Activated CD4-positive, alpha-beta memory T cell treated with anti-CD3 and anti-CD28 coated beads for 36 hours (primary cell): ENCODE measurements at regions of chr10 and their contacts with region 1.

Region 1: GRCh38 chr10:103888113-103888841 is 29.7 kb downstream of the STN1 start:
- DNase-seq: peak; percentile 33
- H3K4me3 Mint-ChIP-seq: no peak overlapping the region
- H3K27ac Mint-ChIP-seq: peak overlapping the region; percentile 80
- H3K4me1 Mint-ChIP-seq: peaks cover 46% of the 10 kb centered on the region
- H3K27me3 Mint-ChIP-seq: no peaks in the 10 kb centered on the region

Region 2: DNA sequence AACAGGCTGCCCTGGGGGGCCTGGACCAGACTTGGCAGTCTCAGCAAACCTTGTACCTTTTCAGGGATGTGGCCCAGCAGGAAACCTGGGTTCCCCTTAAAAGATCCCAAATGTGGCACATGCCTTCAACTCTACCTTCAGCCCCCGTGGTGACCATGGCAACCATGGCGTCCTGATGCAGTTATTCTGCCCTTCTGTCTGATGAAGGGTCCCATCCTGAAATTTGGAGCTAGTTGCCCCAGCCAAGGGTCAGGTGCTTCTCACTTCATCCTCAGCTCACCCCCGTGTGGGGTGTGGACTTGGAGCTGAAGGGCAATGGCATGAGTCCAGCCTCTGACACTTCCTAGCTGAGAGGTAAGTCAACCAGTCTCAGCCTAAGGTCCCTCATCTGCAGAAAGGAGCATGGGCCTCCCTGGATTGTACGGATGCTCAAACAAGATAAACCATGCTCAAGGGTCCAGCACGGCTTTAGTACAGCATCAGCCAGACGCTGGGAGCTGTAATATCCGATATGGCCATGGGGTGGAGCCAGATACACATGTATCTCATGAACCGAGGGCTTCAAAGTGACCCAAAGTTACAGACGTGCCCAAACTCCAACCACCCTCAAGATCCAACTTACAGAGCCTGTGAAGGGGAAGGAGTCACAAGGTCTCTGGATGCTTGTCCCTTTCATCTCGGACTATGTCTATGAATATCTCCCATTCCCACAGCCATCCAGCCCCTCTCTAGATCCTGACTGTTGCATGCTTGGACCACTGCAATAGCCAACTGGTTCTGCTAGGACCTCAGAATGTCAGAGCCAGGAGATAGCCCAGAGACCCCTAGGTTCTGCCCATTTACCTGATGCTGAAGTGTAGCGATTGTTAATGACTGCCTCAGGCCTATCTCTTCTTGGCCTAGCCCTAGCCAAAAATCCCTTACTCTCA is 175.4 kb before region 1 on chr10:
- CTCF ChIA-PET with region 1: interaction called, 87 read pairs
- POLR2A ChIA-PET with region 1: no interaction called
- intact Hi-C with region 1: loop called (anchors 1 kb)
- DNase-seq: peak; percentile 89
- H3K4me3 Mint-ChIP-seq: no peak overlapping the region
- H3K27ac Mint-ChIP-seq: peak overlapping the region; percentile 4
- H3K4me1 Mint-ChIP-seq: peaks cover 2% of the 10 kb centered on the region
- H3K27me3 Mint-ChIP-seq: no peaks in the 10 kb centered on the region

Region 3: DNA sequence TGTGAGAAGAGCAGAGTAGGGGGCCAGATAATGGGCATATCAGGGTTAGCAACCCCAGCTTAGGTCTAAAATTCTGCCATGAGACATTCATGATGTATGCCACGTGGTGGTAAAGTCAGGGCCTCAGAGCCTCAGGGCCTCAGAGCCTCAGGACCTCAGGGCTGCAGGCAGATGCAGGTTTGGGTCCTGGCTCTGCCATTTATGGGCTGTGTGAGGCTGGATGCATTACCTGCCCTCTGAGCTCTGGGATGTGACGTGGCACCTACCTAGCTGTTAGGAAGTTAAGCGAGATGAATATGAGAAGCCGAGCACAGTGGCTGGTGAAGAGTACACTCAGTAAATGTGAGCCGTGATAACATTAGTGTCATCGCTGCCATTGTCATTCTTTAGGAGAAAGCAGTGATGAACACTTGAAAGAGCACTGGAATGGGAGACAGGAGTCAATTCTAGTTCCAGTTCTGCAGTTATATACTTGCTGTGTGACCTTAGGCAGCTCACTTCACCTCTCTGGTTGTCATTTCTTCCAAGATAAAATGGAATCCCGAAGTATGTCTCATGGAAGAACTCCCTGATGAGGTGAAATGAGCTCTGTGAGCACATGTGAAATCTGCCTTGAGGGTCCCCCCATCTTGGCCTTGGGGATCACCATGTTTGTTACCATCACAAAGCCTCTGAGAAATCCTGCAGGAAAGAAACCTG is 160.1 kb before region 1 on chr10:
- CTCF ChIA-PET with region 1: no interaction called
- POLR2A ChIA-PET with region 1: no interaction called
- intact Hi-C with region 1: no loop called
- DNase-seq: no peak
- H3K4me3 Mint-ChIP-seq: no peak overlapping the region
- H3K27ac Mint-ChIP-seq: no peak overlapping the region
- H3K4me1 Mint-ChIP-seq: peaks cover 3% of the 10 kb centered on the region
- H3K27me3 Mint-ChIP-seq: no peaks in the 10 kb centered on the region

Region 4: GRCh38 chr10:103800789-103801540 is 87.3 kb before region 1 on chr10:
- CTCF ChIA-PET with region 1: no interaction called
- POLR2A ChIA-PET with region 1: no interaction called
- intact Hi-C with region 1: no loop called
- DNase-seq: peak; percentile 76
- H3K4me3 Mint-ChIP-seq: no peak overlapping the region
- H3K27ac Mint-ChIP-seq: peak overlapping the region; percentile 35
- H3K4me1 Mint-ChIP-seq: peaks cover 21% of the 10 kb centered on the region
- H3K27me3 Mint-ChIP-seq: no peaks in the 10 kb centered on the region

Region 5: DNA sequence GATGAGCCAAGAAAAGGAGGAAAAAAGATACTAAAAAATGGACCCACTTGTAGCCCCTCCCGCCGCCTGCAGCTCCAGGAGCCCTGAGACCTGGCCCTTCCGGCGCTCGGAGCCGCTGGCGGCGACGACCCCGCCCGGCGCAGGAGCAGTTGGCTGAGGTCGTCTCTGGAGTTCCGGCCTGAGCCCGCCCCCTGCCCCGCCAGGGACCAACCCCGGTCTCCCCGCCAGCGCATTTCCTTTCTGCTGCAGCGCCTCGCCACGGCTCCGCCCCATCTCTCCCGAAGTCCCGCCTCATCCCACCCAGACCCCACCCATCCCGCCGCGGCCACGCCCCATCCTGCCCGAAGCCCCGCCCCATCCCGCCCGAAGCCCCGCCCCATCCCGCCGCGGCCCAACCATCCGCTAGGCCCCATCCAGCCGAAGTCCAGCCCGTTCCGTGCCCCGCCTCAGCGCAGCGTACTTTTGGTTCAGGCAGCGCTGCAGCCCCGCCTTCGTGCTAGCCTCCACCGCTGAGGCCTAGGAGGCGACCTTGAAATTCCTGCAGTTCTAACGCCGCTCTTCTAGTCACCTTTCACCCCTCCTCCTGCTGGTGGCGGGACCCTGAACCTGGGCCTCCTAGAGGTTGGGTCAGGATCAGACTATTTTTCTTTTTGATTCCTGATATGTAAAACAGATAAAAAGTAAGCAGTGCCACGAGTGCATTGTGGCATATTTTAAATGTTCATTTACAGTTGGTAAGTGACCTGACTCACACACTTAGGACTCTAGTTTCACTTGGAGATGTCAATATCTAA is 30.0 kb after region 1 on chr10 and contains the start of gene STN1:
- CTCF ChIA-PET with region 1: interaction called, 11 read pairs
- POLR2A ChIA-PET with region 1: interaction called, 4 read pairs
- intact Hi-C with region 1: loop called (anchors 5 kb)
- DNase-seq: peak; percentile 98
- H3K4me3 Mint-ChIP-seq: peak within 1 kb of the TSS; percentile 98
- H3K27ac Mint-ChIP-seq: peak within 1 kb of the TSS; percentile 98
- H3K4me1 Mint-ChIP-seq: peaks cover 29% of the 10 kb centered on the region
- H3K27me3 Mint-ChIP-seq: no peaks in the 10 kb centered on the region
- total RNA-seq, gene STN1: 56.1 to 57.0 TPM

Region 6: GRCh38 chr10:103983367-103983911 is 95.2 kb after region 1 on chr10:
- CTCF ChIA-PET with region 1: interaction called, 8 read pairs
- POLR2A ChIA-PET with region 1: no interaction called
- intact Hi-C with region 1: loop called (anchors 5 kb)
- DNase-seq: peak; percentile 13
- H3K4me3 Mint-ChIP-seq: peak overlapping the region; percentile 56
- H3K27ac Mint-ChIP-seq: peak overlapping the region; percentile 80
- H3K4me1 Mint-ChIP-seq: peaks cover 74% of the 10 kb centered on the region
- H3K27me3 Mint-ChIP-seq: no peaks in the 10 kb centered on the region

Region 7: DNA sequence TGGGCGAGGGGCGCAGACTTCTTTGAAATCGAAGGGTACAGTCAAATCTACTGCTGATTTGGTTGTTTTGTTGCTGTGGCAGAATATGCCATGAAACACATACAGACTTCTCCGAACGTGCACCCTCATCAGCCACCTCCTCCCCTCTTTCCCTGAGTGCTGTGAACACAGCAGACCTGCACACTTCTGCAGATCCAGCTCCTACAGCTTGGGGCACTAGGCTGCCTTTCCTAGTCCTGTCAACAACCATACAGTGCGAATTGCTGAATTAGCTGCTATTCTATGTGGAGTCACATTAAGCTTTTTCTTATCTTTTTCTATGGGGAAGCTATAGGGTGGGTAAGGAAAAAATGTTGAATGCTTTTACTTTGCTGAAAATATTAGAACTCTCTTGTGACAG is 139.9 kb after region 1 on chr10:
- CTCF ChIA-PET with region 1: interaction called, 8 read pairs
- POLR2A ChIA-PET with region 1: no interaction called
- intact Hi-C with region 1: loop called (anchors 5 kb)
- DNase-seq: peak; percentile 50
- H3K4me3 Mint-ChIP-seq: no peak overlapping the region
- H3K27ac Mint-ChIP-seq: peak overlapping the region; percentile 5
- H3K4me1 Mint-ChIP-seq: peaks cover 14% of the 10 kb centered on the region
- H3K27me3 Mint-ChIP-seq: no peaks in the 10 kb centered on the region

Region 8: DNA sequence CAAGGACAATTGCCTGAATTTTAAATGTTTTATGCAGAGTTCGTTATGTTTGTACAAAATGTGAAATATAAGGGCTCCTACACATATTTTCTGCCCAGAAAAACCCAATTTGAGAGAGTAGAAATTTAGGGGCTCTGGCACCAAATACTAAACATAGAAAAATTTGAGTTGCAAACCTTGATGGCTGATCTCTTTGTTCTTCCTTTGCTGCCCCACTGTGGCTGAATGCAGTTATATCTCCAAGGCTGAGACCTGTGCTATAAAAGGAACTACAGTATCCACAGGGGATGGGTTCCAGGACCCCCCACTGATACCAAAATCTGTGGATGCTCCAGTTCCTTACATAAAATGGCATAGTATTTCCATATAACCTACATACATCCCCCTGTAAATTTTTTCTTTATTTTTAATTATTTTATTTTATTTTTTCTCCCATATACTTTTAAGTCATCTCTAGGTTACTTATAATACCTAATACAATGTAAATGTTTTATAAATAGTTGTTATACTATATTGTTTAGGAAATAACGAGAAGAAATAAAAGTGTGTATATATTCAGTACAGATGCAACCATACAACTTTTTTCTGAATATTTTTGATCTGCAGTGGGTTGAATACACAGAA is 321.4 kb after region 1 on chr10:
- CTCF ChIA-PET with region 1: interaction called, 13 read pairs
- POLR2A ChIA-PET with region 1: no interaction called
- intact Hi-C with region 1: loop called (anchors 1 kb)
- DNase-seq: peak; percentile 44
- H3K4me3 Mint-ChIP-seq: no peak overlapping the region
- H3K27ac Mint-ChIP-seq: no peak overlapping the region
- H3K4me1 Mint-ChIP-seq: no peaks in the 10 kb centered on the region
- H3K27me3 Mint-ChIP-seq: peaks cover 12% of the 10 kb centered on the region

Region 9: GRCh38 chr10:104291439-104291951 is 403.2 kb after region 1 on chr10:
- CTCF ChIA-PET with region 1: interaction called, 15 read pairs
- POLR2A ChIA-PET with region 1: no interaction called
- intact Hi-C with region 1: no loop called
- DNase-seq: peak; percentile 92
- H3K4me3 Mint-ChIP-seq: peak overlapping the region; percentile 39
- H3K27ac Mint-ChIP-seq: no peak overlapping the region
- H3K4me1 Mint-ChIP-seq: peaks cover 12% of the 10 kb centered on the region
- H3K27me3 Mint-ChIP-seq: peaks cover 23% of the 10 kb centered on the region